Activated T-helper 1 cell treated with anti-CD3 and anti-CD28 coated beads, Interleukin-12 subunit alpha, Interleukin-12 subunit beta, Interleukin-2, Interleukin-4 antibody, amounts not matched to agents 30 ng/mL and 10 ng/mL and 1 ng/mL, durations not matched to agents 14 hours and 24 hours and 36 hours (primary cell): ENCODE measurements at regions of chr9 and their contacts with region 1.

Region 1: GRCh38 chr9:129884220-129885017 is 49.2 kb downstream of the USP20 start:
- DNase-seq: peak; percentile 94
- H3K4me3 Mint-ChIP-seq: peak overlapping the region; percentile 94
- H3K27ac Mint-ChIP-seq: peak overlapping the region; percentile 100
- H3K4me1 Mint-ChIP-seq: peaks cover 55% of the 10 kb centered on the region
- H3K27me3 Mint-ChIP-seq: peaks cover 2% of the 10 kb centered on the region

Region 2: DNA sequence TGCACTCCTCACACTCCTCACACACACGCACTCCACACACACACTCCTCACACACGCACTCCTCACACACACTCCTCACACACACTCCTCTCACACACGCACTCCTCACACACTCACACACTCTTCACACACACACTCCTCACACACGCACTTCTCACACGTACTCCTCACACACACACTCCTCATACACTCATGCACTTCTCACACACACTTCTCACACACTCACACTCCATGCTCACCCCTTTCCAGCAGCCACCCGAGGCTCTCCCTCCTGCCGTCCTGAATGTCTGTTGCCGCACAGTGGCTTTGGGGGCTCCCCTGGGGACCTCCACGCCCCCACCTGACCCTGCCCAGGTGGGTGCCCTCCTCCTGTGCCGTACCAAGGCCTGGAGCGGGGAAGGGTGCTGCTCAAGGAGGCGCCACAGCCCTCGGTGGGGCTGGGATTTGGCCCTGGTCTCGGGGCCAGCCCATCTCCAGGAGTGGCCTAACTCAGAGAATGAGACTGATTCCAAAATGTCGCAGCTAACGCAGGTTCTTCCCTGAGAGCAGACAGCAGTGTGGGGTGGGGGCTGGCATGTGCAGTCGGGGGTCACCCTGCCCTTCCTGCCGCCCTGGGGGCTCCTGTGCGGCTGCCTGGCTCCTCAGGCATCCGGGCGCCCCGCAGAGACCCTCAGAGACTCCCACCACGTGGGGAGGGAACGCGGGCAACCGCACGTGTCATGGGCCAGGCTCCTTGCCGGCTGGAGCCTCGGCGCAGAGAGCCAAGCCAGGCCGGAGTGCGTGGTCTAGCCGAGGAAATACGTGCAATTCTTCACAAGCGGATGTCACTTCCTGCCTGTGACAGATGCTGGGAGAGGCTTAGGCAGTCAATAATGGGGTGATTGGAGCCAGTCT is 307.8 kb before region 1 on chr9:
- intact Hi-C with region 1: no loop called
- DNase-seq: no peak
- H3K4me3 Mint-ChIP-seq: no peak overlapping the region
- H3K27ac Mint-ChIP-seq: peak overlapping the region; percentile 69
- H3K4me1 Mint-ChIP-seq: peaks cover 58% of the 10 kb centered on the region
- H3K27me3 Mint-ChIP-seq: peaks cover 2% of the 10 kb centered on the region

Region 3: GRCh38 chr9:129863059-129863690 is 21.2 kb before region 1 on chr9:
- intact Hi-C with region 1: loop called (anchors 1 kb)
- DNase-seq: peak; percentile 77
- H3K4me3 Mint-ChIP-seq: peak overlapping the region; percentile 72
- H3K27ac Mint-ChIP-seq: peak overlapping the region; percentile 93
- H3K4me1 Mint-ChIP-seq: peaks cover 65% of the 10 kb centered on the region
- H3K27me3 Mint-ChIP-seq: no peaks in the 10 kb centered on the region

Region 4: DNA sequence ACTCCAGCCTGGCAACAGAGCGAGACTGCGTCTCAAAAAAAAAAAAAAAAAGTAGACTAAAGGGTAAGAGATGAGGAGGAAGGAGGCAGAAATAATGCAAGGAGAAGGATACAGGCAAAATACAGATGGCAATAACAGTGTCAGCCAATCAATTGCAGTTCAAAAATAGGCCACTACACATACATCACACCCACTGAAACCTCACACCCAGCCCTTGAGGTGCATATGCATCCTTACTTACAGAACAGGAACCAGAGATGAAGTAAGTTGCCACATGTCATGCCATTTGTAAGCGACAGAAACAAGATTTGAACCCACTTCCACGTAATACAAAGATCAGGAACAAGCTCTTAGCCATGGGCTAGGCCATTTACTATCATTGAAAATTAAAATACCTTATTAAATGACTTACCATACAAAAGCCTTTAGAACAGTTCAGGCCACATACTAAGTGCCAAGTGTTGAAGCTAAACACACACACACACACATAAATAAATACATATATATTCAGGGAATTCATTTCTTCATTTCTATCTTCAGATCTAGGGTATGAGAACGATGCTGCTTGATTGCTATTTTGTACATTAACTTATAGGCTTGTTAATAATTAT is 60.2 kb after region 1 on chr9:
- intact Hi-C with region 1: loop called (anchors 1 kb)
- DNase-seq: peak; percentile 59
- H3K4me3 Mint-ChIP-seq: peak overlapping the region; percentile 28
- H3K27ac Mint-ChIP-seq: peak overlapping the region; percentile 88
- H3K4me1 Mint-ChIP-seq: peaks cover 44% of the 10 kb centered on the region
- H3K27me3 Mint-ChIP-seq: no peaks in the 10 kb centered on the region

Region 5: GRCh38 chr9:130015353-130016019 is 131.1 kb after region 1 on chr9:
- intact Hi-C with region 1: loop called (anchors 1 kb)
- DNase-seq: no peak
- H3K4me3 Mint-ChIP-seq: no peak overlapping the region
- H3K27ac Mint-ChIP-seq: no peak overlapping the region
- H3K4me1 Mint-ChIP-seq: peaks cover 65% of the 10 kb centered on the region
- H3K27me3 Mint-ChIP-seq: no peaks in the 10 kb centered on the region

Region 6: DNA sequence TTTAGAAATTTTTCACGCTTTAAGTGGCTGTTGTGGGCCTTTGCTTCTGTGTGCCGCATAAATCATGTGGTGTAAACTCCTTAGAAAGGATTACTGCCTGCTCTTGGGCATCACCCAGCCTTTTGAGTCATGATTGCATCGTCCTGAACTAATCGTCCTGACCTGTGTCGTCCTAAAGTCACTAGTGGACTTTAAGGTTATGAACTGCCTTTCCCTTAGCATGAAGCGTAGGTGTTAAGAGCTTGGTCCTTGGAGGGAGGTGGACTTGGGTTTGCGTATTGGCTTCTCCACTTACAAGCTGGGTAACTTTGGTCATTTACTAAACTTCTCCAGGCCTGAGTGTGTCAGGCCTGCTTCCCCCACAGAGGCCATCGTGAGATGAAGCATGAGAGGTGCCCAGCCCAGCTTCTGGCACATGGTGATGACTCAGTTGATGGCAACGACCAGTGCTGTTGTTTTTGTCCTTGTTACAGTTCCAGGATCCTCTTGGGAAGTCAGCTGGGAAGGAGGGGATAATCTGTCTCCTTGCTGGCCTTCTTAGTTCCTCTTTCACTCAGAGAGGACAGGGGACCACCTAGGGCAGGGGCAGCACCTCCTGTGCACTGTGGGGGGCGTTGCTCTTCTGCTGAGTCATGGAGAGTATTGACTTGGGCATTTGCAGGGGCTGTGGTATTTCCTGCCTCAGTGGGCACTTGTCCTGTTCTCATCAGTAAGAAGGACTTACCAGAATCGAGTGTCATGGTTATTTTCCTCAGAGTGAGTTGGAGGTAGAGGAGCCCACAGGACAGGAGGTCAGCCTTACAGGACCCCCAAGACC is 233.6 kb after region 1 on chr9:
- intact Hi-C with region 1: no loop called
- DNase-seq: no peak
- H3K4me3 Mint-ChIP-seq: no peak overlapping the region
- H3K27ac Mint-ChIP-seq: no peak overlapping the region
- H3K4me1 Mint-ChIP-seq: no peaks in the 10 kb centered on the region
- H3K27me3 Mint-ChIP-seq: no peaks in the 10 kb centered on the region

Region 7: GRCh38 chr9:130128733-130129431 is 244.5 kb after region 1 on chr9:
- intact Hi-C with region 1: loop called (anchors 2 kb)
- DNase-seq: peak; percentile 29
- H3K4me3 Mint-ChIP-seq: peak overlapping the region; percentile 80
- H3K27ac Mint-ChIP-seq: peak overlapping the region; percentile 95
- H3K4me1 Mint-ChIP-seq: peaks cover 46% of the 10 kb centered on the region
- H3K27me3 Mint-ChIP-seq: no peaks in the 10 kb centered on the region